Right ventricle myocardium inferior (tissue), 1 donor: ENCODE measurements at regions of chr3 and their contacts with region 1.

Region 1: DNA sequence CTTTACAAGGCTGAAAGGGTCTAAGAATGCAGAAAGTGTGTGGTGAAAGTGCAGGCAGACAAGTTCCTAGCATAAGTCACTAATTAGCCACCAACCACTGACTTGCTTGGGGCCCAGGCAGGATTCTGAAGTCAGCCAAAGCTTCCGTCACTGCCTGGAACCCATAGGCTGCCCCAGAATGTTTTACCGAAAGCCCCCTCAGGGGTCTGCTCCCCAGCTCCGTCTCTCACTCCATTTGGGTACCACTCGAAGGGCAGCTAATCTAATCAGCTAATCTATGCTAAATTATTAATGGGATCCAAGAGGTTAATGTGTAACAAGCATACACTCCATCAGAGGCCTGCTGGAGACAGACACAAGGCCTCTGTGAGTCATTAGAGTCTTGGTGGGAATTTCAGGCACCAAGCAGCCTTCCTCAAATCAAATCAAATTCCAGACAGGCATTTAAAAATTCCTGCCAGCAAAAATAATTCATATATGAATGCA is 13.2 kb downstream of the ADAMTS9 start:
- DNase-seq: no peak
- ATAC-seq: no peak

Region 2: GRCh38 chr3:64559588-64559987 is 115.0 kb before region 1 on chr3:
- intact Hi-C with region 1: loop called (anchors 10 kb)
- DNase-seq: no peak
- ATAC-seq: no peak

Region 3: GRCh38 chr3:65605876-65606453 is 931.3 kb after region 1 on chr3:
- intact Hi-C with region 1: no loop called
- DNase-seq: no peak
- ATAC-seq: no peak